ENCODE measurements at regions of chr18 and their contacts with region 1.

Region 1: GRCh38 chr18:79523736-79524180 is 128.0 kb downstream of the NFATC1 start:
- DNase-seq: peak; percentile 92
- ATAC-seq: peak; percentile 57
- H3K4me3 ChIP-seq: peak overlapping the region in 4 of 5 experiments; percentile 37 to 46 (median 42)
- H3K4me3 Mint-ChIP-seq: peak overlapping the region; percentile 76
- H3K27ac ChIP-seq: peak overlapping the region; percentile 96
- H3K27ac Mint-ChIP-seq: peak overlapping the region; percentile 85
- H3K4me1 ChIP-seq: peaks cover 54 to 68% of the 10 kb centered on the region in 2 donors
- H3K4me1 Mint-ChIP-seq: peaks cover 67% of the 10 kb centered on the region
- H3K27me3 ChIP-seq: no peaks in the 10 kb centered on the region
- H3K27me3 Mint-ChIP-seq: no peaks in the 10 kb centered on the region
- CTCF ChIP-seq: no peak

Region 2: GRCh38 chr18:79393635-79394533 is 129.9 kb before region 1 on chr18:
- CTCF ChIA-PET with region 1: interaction called, 38 read pairs
- POLR2A ChIA-PET with region 1: interaction called, 13 read pairs
- intact Hi-C with region 1: loop called (anchors 1 kb)
- DNase-seq: peak; percentile 65
- ATAC-seq: peak; percentile 18
- H3K4me3 ChIP-seq: peak overlapping the region in 4 of 5 experiments; percentile 42 to 78 (median 60)
- H3K4me3 Mint-ChIP-seq: peak overlapping the region; percentile 85
- H3K27ac ChIP-seq: peak overlapping the region; percentile 49 to 66
- H3K27ac Mint-ChIP-seq: peak overlapping the region; percentile 74
- H3K4me1 ChIP-seq: peaks cover 38 to 45% of the 10 kb centered on the region in 2 donors
- H3K4me1 Mint-ChIP-seq: peaks cover 36% of the 10 kb centered on the region
- H3K27me3 ChIP-seq: peaks cover 0 to 3% (median 0%) of the 10 kb centered on the region in 4 experiments
- H3K27me3 Mint-ChIP-seq: no peaks in the 10 kb centered on the region
- CTCF ChIP-seq: no peak

Region 3: GRCh38 chr18:79445696-79446561 is 77.8 kb before region 1 on chr18:
- CTCF ChIA-PET with region 1: interaction called, 6 read pairs
- POLR2A ChIA-PET with region 1: interaction called, 10 read pairs
- intact Hi-C with region 1: no loop called
- DNase-seq: no peak
- ATAC-seq: no peak
- H3K4me3 ChIP-seq: no peak overlapping the region
- H3K4me3 Mint-ChIP-seq: no peak overlapping the region
- H3K27ac ChIP-seq: no peak overlapping the region
- H3K27ac Mint-ChIP-seq: no peak overlapping the region
- H3K4me1 ChIP-seq: peaks cover 16 to 22% of the 10 kb centered on the region in 2 donors
- H3K4me1 Mint-ChIP-seq: peaks cover 39% of the 10 kb centered on the region
- H3K27me3 ChIP-seq: no peaks in the 10 kb centered on the region
- H3K27me3 Mint-ChIP-seq: no peaks in the 10 kb centered on the region
- CTCF ChIP-seq: no peak

Region 4: GRCh38 chr18:79496978-79497637 is 26.6 kb before region 1 on chr18:
- CTCF ChIA-PET with region 1: interaction called, 6 read pairs
- POLR2A ChIA-PET with region 1: interaction called, 11 read pairs
- intact Hi-C with region 1: loop called (anchors 1 kb)
- DNase-seq: peak; percentile 82
- ATAC-seq: peak; percentile 80
- H3K4me3 ChIP-seq: peak overlapping the region in 1 of 5 experiments; percentile 7
- H3K4me3 Mint-ChIP-seq: peak overlapping the region; percentile 80
- H3K27ac ChIP-seq: peak overlapping the region; percentile 68
- H3K27ac Mint-ChIP-seq: peak overlapping the region; percentile 84
- H3K4me1 ChIP-seq: peaks cover 32% of the 10 kb centered on the region in 2 donors
- H3K4me1 Mint-ChIP-seq: peaks cover 33% of the 10 kb centered on the region
- H3K27me3 ChIP-seq: no peaks in the 10 kb centered on the region
- H3K27me3 Mint-ChIP-seq: no peaks in the 10 kb centered on the region
- CTCF ChIP-seq: no peak

Region 5: GRCh38 chr18:79507076-79507545 is 16.6 kb before region 1 on chr18:
- CTCF ChIA-PET with region 1: interaction called, 23 read pairs
- POLR2A ChIA-PET with region 1: interaction called, 11 read pairs
- intact Hi-C with region 1: loop called (anchors 1 kb)
- DNase-seq: peak; percentile 71
- ATAC-seq: peak; percentile 29
- H3K4me3 ChIP-seq: peak overlapping the region in 4 of 5 experiments; percentile 17 to 43 (median 36)
- H3K4me3 Mint-ChIP-seq: peak overlapping the region; percentile 75
- H3K27ac ChIP-seq: peak overlapping the region; percentile 86 to 91
- H3K27ac Mint-ChIP-seq: peak overlapping the region; percentile 93
- H3K4me1 ChIP-seq: peaks cover 48 to 56% of the 10 kb centered on the region in 2 donors
- H3K4me1 Mint-ChIP-seq: peaks cover 60% of the 10 kb centered on the region
- H3K27me3 ChIP-seq: no peaks in the 10 kb centered on the region
- H3K27me3 Mint-ChIP-seq: no peaks in the 10 kb centered on the region
- CTCF ChIP-seq: no peak

Region 6: DNA sequence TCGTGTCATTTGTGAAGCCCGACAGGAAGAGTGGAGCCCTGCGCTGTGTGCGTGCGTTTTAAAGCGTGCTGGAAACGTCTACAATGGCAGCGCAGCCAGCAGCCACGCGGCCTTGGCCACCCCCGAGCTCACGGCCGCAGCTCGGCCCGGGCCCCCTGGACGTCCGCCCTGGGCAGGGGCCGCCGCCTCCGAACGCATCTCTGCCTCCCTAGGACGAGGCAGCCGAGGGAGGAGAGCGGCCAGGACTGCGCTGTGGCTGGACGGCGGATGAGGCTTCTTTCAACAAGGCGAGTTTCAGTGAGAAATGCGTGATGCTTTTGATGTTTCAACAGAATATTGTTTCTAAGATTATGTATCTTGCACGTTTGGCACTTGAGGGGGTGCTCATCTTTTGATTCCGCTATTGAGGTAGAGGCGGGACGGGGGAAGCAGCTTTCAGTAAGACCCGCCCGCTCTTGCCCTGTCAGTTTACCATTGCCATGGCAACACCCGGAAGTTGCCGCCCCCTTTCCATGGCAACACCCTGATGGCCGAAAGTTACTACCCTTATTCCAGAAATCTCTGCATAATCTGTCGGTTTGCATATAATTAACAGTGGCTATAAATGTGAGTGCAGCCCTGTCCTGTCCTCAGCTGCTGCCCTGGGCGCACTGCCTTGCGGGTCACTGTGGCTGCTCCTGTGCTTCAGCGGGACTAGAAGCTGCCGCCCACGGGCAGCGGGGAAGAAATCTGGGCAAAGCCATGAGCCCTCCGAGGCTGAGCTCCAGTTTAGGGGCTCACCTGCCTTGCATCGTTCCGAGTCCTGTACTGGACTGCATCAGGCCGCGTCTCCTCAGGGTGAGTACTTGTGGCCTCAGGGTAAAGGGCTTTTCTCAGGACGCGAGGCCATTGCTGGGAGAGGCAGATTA is 623.9 kb after region 1 on chr18:
- CTCF ChIA-PET with region 1: no interaction called
- POLR2A ChIA-PET with region 1: no interaction called
- intact Hi-C with region 1: no loop called
- DNase-seq: peak; percentile 86
- ATAC-seq: peak; percentile 86
- H3K4me3 ChIP-seq: peak overlapping the region; percentile 55 to 76 (median 66)
- H3K4me3 Mint-ChIP-seq: peak overlapping the region; percentile 94
- H3K27ac ChIP-seq: no peak overlapping the region
- H3K27ac Mint-ChIP-seq: peak overlapping the region; percentile 92
- H3K4me1 ChIP-seq: peaks cover 10 to 11% of the 10 kb centered on the region in 2 donors
- H3K4me1 Mint-ChIP-seq: peaks cover 20% of the 10 kb centered on the region
- H3K27me3 ChIP-seq: no peaks in the 10 kb centered on the region
- H3K27me3 Mint-ChIP-seq: no peaks in the 10 kb centered on the region
- CTCF ChIP-seq: no peak